Posterior vena cava (tissue), 2 donors: ENCODE measurements at regions of chrX and their contacts with region 1.

Region 1: DNA sequence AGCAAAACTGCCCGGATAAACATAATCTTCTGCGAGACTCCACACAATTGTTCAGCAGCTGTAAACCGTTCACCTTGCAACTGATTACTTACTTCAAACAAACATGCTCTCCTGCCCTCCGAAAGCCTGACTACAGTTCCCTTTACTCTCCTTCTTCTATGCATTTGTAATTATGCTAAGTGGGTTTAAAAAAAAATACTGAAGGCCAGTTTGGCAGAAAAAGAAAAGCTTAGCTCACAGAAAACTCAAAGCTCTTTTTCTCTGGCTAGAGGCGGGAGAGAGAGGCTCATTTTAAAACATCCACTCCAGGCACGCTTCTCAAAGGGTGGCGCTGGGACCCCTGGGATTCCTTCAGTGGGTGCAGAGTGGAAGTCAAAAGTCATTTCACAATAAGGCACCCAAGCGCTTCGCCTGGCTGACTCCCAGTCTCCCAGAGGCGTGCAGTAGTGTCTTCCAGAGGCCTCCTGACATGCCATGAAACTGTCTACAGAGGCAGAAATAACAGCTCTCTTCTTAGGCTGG is 1.9 kb downstream of the DHRSX start:
- DNase-seq: peak; percentile 66

Region 2: DNA sequence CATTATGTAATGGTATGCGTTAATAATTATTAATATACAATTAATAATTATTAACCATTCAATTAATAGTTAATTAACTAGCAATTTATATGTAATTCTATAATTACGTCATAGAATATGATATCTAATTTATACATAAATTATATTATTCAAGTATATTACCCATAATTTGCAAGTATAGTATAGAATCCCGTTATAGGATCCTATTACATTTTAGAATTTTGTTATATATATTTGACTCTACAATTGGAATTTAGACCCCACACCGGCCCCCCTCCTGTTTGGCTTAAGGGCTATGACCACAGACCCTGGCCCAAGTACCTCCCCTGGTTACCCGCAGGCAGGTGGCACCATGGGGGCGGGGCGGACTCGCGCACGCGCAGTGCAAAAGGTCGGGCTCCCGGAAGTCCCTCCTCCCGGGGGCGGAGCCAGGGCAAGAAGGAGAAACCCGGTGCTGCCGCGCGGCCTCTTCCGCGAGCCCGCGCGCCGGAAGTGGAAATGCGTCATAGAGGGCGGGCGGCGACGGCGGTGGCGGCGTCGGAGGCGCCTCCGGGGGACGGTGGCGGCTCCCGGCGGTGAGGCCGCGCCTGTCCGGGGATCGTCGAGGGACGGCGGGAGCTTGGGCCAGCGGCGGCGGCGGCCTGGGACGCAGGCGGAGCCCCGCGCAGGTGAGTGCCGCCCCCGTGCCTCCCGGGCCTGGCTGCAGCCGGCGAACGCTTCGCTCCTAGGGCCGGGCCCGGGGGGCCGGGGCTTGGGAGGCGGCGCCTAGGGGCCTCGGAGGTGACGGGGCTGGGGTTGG is 907.5 kb before region 1 on chrX and contains the start of gene AKAP17A:
- intact Hi-C with region 1: loop called in 1 of 2 experiments (anchors 5 kb)
- DNase-seq: peak; percentile 98
- total RNA-seq, gene AKAP17A: 20.8 to 23.0 TPM